Body of pancreas (tissue), 4 donors: ENCODE measurements at regions of chr9 and their contacts with region 1.

Region 1: DNA sequence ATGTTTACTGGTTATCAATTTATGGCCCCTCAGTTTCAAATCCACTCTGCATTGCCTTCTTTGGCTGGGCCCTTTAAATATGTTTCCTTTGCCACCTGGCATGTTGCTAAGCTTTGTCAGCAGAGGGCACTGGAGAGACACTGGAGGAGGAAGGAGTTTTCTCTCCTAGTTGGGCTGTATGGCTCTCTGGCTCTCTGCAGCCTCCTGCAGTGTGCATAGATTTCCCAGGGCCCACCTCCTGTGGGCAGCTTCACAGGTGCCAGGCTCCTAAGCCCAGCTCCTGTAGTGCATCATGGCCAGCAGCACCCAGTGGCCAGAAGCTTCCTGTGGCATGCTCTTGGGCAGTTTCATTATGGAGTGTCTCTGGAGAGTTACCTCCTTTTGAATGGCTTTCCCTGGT is 23.3 kb downstream of the CAVIN4 start:
- DNase-seq: peak; percentile 44 to 62 (median 54)
- ATAC-seq: peak; percentile 36
- H3K4me3 ChIP-seq: no peak overlapping the region
- H3K27ac ChIP-seq: no peak overlapping the region
- H3K4me1 ChIP-seq: peaks cover 11% of the 10 kb centered on the region
- H3K27me3 ChIP-seq: no peaks in the 10 kb centered on the region
- CTCF ChIP-seq: peak; percentile 5 to 57 (median 48)
- POLR2A ChIP-seq: no peak

Region 2: GRCh38 chr9:101235105-101235866 is 634.1 kb after region 1 on chr9:
- intact Hi-C with region 1: loop called (anchors 10 kb)
- DNase-seq: no peak
- ATAC-seq: no peak
- H3K4me3 ChIP-seq: no peak overlapping the region
- H3K27ac ChIP-seq: no peak overlapping the region
- H3K4me1 ChIP-seq: no peaks in the 10 kb centered on the region
- H3K27me3 ChIP-seq: no peaks in the 10 kb centered on the region
- CTCF ChIP-seq: peak; percentile 16 to 70 (median 61)
- POLR2A ChIP-seq: no peak